Activated CD4-positive, alpha-beta memory T cell treated with anti-CD3 and anti-CD28 coated beads for 36 hours (primary cell): ENCODE measurements at regions of chr22 and their contacts with region 1.

Region 1: DNA sequence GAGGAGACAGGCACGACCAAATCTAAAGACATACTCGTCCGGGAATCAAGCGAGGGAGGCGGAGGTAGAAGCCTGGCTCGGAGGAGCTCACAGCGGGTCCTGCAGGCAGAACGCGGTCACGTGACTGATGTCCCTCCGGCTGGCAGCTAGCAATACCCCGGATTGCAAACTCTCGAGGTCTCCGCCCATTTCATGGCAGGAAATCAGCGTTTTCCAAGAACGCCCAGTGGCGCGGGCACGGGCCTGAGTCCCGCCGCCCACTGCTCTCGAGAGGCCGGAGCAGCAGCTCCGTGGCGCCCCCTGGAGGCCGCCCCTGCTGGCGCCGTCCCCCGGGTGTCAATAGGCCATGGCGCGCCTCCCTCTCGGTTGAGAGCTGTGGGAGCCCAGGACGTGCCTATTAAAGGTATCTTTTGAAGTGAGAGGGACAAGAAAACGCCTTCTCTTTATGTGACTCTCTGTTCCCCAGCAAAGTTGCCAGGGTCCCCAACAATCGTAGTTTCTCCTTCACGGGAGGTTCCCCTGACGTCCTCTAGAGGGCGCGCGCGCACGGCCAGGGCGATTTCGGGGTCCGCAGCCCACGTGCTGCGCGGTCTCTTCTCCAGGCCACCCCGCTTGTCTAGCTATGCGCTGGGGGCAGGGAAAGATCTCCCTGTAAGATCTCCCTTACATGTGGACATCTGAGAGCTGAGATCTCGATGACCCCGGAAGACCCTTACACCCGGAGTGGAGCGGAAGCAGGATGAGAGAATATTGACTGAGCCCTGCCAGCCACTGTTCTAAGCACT is 37.3 kb upstream of the RBFOX2 start:
- DNase-seq: peak; percentile 85
- H3K4me3 Mint-ChIP-seq: peak overlapping the region; percentile 78
- H3K27ac Mint-ChIP-seq: peak overlapping the region; percentile 69
- H3K4me1 Mint-ChIP-seq: peaks cover 4% of the 10 kb centered on the region
- H3K27me3 Mint-ChIP-seq: no peaks in the 10 kb centered on the region

Region 2: GRCh38 chr22:35489239-35489638 is 576.7 kb before region 1 on chr22:
- CTCF ChIA-PET with region 1: no interaction called
- POLR2A ChIA-PET with region 1: no interaction called
- intact Hi-C with region 1: no loop called
- DNase-seq: no peak
- H3K4me3 Mint-ChIP-seq: no peak overlapping the region
- H3K27ac Mint-ChIP-seq: no peak overlapping the region
- H3K4me1 Mint-ChIP-seq: no peaks in the 10 kb centered on the region
- H3K27me3 Mint-ChIP-seq: peaks cover 35% of the 10 kb centered on the region

Region 3: DNA sequence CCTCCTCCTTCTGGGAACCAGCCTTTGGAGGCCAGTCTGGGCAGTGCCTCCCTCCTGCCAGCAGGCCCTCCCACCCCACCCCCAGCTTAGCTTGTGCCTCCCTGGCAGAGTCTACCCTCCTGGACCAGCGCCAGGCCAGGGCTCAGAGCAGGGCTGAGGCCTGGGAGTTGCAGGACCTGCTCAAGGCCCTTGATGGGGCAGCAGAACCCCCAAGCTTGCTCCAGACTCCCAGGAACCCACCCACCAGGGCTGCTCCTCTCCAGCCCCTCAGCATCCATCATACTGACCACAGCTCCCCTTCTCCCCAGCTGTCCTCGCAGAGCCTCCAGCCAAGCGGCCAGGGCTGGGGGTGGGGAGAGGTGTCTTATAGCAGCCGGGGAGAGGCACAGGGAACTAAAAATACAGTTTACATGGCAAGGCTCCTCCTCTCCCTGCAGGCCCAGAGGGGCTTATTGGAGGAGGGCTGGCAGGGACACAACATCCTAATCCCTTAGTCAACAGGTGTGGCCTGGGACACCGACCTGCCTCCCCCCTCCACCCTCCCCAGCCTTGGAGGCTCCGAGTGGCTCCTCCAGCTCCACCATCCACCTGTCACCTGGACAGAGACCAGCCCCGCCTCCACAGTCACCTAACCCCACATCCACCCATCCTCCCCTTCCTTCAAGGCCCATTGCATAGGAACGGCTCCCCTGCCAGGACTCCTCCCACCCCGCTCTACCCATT is 443.6 kb before region 1 on chr22:
- CTCF ChIA-PET with region 1: interaction called, 20 read pairs
- POLR2A ChIA-PET with region 1: no interaction called
- intact Hi-C with region 1: loop called (anchors 5 kb)
- DNase-seq: no peak
- H3K4me3 Mint-ChIP-seq: no peak overlapping the region
- H3K27ac Mint-ChIP-seq: no peak overlapping the region
- H3K4me1 Mint-ChIP-seq: peaks cover 3% of the 10 kb centered on the region
- H3K27me3 Mint-ChIP-seq: peaks cover 3% of the 10 kb centered on the region

Region 4: GRCh38 chr22:35660291-35661127 is 405.5 kb before region 1 on chr22:
- CTCF ChIA-PET with region 1: interaction called, 10 read pairs
- POLR2A ChIA-PET with region 1: no interaction called
- intact Hi-C with region 1: no loop called
- DNase-seq: peak; percentile 72
- H3K4me3 Mint-ChIP-seq: peak overlapping the region; percentile 43
- H3K27ac Mint-ChIP-seq: peak overlapping the region; percentile 86
- H3K4me1 Mint-ChIP-seq: peaks cover 77% of the 10 kb centered on the region
- H3K27me3 Mint-ChIP-seq: no peaks in the 10 kb centered on the region

Region 5: DNA sequence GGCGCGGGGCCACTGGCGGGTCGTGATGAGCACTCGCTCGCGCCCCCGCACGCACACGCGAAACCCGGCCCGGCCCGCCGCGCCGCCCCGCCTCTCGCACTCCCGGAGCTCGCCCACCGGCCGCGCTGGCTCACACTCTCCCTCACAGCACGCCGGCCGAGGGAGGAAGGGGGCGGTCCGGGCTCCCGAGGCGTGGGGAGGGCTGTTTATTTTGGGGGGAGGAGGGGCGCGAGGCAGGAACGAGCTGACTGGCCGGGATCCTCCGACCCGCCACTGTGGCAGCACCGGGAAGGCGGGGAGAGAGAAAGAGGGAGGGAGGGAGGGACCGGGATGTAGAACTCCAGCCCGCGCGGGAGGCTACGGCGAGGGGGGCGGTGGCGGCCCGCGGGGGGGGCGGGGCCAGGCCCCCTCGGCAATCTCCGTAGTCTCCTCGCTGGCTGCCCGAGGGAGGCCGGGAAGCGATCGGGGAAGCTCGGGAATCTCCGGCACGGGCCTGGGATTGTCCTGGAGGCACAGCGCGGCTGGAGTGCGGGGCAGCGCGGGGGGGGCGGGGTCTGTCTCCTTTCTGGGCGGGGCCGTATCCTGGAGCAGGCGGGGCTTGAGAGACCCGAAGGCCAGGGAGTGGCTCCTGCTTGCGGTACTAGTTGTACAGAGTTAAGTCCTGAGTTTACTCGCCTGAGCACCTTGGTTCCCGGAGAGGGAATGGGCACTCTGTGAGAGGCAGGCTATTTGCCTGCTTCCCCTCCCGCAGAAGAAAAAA is 37.1 kb before region 1 on chr22 and contains the start of gene RBFOX2:
- CTCF ChIA-PET with region 1: interaction called, 78 read pairs
- POLR2A ChIA-PET with region 1: interaction called, 6 read pairs
- intact Hi-C with region 1: loop called (anchors 5 kb)
- DNase-seq: peak; percentile 85
- H3K4me3 Mint-ChIP-seq: peak within 1 kb of the TSS; percentile 81
- H3K27ac Mint-ChIP-seq: peak within 1 kb of the TSS; percentile 19
- H3K4me1 Mint-ChIP-seq: peaks cover 20% of the 10 kb centered on the region
- H3K27me3 Mint-ChIP-seq: peaks cover 12% of the 10 kb centered on the region
- total RNA-seq, gene RBFOX2: 4.3 to 4.6 TPM

Region 6: DNA sequence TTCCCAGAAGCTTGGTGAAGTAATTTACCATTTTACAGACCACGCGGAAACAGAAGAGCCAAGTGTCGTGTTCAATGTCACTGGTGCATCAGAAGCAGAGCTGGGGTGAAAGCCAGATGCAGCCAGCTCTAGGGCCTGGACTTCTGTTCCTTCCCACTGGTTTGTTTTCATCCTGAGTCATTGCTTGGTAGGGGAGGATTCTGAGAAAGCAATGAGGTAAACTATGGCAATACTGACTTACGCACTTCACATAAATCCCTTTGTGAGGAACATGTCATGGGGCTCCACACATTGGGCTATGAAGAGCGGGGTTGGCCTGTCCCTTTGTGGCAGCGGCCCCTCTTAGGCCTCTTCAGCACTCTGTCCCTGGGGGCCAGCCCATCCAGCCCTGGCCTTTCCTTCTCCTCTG is 15.1 kb after region 1 on chr22:
- CTCF ChIA-PET with region 1: interaction called, 50 read pairs
- POLR2A ChIA-PET with region 1: no interaction called
- intact Hi-C with region 1: no loop called
- DNase-seq: no peak
- H3K4me3 Mint-ChIP-seq: no peak overlapping the region
- H3K27ac Mint-ChIP-seq: no peak overlapping the region
- H3K4me1 Mint-ChIP-seq: peaks cover 2% of the 10 kb centered on the region
- H3K27me3 Mint-ChIP-seq: no peaks in the 10 kb centered on the region

Region 7: GRCh38 chr22:36123673-36124630 is 58.0 kb after region 1 on chr22:
- CTCF ChIA-PET with region 1: interaction called, 35 read pairs
- POLR2A ChIA-PET with region 1: no interaction called
- intact Hi-C with region 1: loop called (anchors 1 kb)
- DNase-seq: peak; percentile 95
- H3K4me3 Mint-ChIP-seq: peak overlapping the region; percentile 66
- H3K27ac Mint-ChIP-seq: peak overlapping the region; percentile 67
- H3K4me1 Mint-ChIP-seq: peaks cover 12% of the 10 kb centered on the region
- H3K27me3 Mint-ChIP-seq: no peaks in the 10 kb centered on the region